ENCODE measurements at regions of chr15 and their contacts with region 1.

Region 1: GRCh38 chr15:98518823-98519561 is 129.3 kb upstream of the IGF1R start:
- H3K4me3 ChIP-seq: no peak overlapping the region
- H3K27ac ChIP-seq: no peak overlapping the region
- H3K4me1 ChIP-seq: no peaks in the 10 kb centered on the region; the same call in 1 of the 2 replicates
- CTCF ChIP-seq: peak; percentile 83

Region 2: GRCh38 chr15:98113327-98113726 is 405.7 kb before region 1 on chr15:
- CTCF ChIA-PET with region 1: no interaction called
- POLR2A ChIA-PET with region 1: no interaction called
- H3K4me3 ChIP-seq: no peak overlapping the region
- H3K27ac ChIP-seq: no peak overlapping the region
- H3K4me1 ChIP-seq: no peaks in the 10 kb centered on the region
- CTCF ChIP-seq: no peak

Region 3: DNA sequence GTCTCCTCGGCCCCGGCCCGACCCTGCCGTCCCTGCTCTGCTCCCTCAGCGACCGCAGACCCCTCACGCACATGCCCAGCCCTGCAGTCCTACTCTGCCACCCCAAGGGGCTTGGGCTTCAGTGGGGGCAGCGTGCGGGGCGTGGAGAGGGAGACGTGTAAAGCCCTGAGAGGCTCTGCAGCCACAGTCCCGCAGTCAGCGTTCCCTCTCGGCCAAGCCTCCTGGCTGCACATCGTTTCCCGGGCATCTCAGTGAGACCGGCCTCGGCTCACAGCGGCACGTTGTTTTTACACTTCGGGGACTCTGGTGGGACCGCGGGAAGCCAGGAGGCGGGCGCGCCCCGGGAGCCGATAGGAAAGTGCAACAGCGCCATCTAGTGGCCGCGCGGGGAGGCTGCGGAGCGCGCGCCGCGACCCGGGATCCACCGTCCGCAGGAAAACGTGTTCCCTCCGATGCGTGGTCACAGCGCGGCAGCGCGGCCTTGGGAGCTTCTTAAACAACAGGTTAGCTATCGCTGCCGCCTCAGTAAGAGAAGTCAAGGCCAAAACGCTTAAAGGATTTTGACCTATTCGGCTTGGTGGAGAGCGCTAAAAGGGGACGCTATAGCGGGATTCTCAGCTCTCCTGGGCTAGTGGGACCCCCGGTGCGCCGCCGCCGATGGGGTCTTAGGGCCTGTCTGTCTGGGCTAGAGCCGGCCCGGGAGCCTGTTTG is 97.4 kb before region 1 on chr15:
- CTCF ChIA-PET with region 1: no interaction called
- POLR2A ChIA-PET with region 1: no interaction called
- H3K4me3 ChIP-seq: peak overlapping the region; percentile 18
- H3K27ac ChIP-seq: no peak overlapping the region
- H3K4me1 ChIP-seq: 0 out of 2 replicates have a peak, but pooled peaks cover 2% of the 10 kb centered on the region
- CTCF ChIP-seq: peak; percentile 95

Region 4: DNA sequence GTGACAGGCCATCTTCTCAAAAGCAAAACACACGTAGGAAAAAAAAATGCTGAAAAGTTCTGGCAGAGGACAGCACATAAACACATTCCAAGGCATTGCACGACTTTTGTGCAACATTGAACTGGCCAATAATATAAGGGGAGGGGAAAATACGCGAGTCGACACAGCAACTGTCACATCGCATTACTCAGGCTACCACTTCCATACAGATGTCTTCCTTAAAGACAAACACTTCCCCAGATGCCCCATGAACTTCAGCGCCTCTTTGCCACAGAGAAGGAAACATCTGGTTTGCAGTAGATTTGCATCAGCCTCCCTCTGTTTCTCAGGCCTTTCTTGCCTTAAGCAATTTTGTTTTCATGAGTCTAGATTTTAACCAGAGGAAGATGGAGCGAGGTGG is 15.0 kb before region 1 on chr15:
- CTCF ChIA-PET with region 1: interaction called, 11 read pairs
- POLR2A ChIA-PET with region 1: no interaction called
- H3K4me3 ChIP-seq: no peak overlapping the region
- H3K27ac ChIP-seq: no peak overlapping the region
- H3K4me1 ChIP-seq: no peaks in the 10 kb centered on the region
- CTCF ChIP-seq: no peak

Region 5: DNA sequence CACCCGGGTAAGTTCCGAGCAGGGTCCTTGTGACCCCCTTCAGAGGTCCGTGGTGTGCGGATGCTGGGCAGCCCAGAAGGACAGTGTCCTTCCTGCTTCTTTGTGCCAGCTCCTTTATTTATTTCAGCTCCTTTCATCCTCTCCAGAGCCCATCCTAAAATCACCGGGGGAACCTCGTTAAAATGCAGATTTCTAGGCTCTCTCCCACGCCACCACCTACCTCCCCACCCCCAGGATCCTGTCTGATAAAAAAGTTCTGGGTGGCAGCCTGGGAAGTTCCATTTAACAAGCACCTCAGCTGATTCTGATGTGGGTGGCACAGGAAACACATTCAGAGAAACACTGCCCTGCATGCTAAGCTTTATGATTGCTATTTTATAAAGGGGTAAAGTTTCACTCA is 116.9 kb after region 1 on chr15:
- CTCF ChIA-PET with region 1: interaction called, 12 read pairs
- POLR2A ChIA-PET with region 1: no interaction called
- H3K4me3 ChIP-seq: no peak overlapping the region
- H3K27ac ChIP-seq: no peak overlapping the region
- H3K4me1 ChIP-seq: no peaks in the 10 kb centered on the region; the same call in 1 of the 2 replicates
- CTCF ChIP-seq: no peak

Region 6: DNA sequence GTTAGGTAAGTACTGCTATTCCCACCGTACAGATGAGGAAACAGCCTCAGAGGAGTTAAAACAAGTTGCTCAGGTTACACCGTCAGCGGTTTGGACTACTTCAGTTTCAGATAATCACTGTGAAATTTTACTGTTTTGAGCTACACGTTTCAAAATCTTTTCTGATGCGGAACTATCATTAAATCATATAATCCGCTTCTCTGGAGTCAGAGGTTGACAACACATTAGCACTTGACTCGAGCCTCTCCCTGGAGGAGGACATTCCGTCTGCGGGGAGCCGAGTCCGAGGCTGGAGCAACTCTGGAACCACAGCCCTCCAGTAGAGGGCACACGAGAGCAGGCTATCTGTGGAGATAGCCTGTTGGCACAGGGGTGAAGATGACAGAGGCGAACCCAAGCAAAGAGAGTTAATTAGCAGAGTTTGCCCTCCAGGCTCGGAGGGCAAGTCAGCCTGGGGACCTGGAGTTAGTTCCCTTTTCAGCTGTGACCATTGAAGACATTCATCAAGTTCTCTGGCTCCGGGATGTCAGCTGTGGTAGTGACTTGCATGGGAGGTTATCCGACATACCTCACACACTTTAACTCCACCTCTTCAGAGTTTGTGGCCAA is 260.6 kb after region 1 on chr15:
- CTCF ChIA-PET with region 1: interaction called, 15 read pairs
- POLR2A ChIA-PET with region 1: no interaction called
- H3K4me3 ChIP-seq: no peak overlapping the region
- H3K27ac ChIP-seq: no peak overlapping the region
- H3K4me1 ChIP-seq: peaks cover 24% of the 10 kb centered on the region
- CTCF ChIP-seq: peak; percentile 90

Region 7: GRCh38 chr15:98881526-98882520 is 362.8 kb after region 1 on chr15:
- CTCF ChIA-PET with region 1: interaction called, 12 read pairs
- POLR2A ChIA-PET with region 1: no interaction called
- H3K4me3 ChIP-seq: no peak overlapping the region
- H3K27ac ChIP-seq: no peak overlapping the region
- H3K4me1 ChIP-seq: peaks cover 9% of the 10 kb centered on the region
- CTCF ChIP-seq: 0 out of 2 replicates have a peak, but pooled peaks have one; percentile 27

Region 8: DNA sequence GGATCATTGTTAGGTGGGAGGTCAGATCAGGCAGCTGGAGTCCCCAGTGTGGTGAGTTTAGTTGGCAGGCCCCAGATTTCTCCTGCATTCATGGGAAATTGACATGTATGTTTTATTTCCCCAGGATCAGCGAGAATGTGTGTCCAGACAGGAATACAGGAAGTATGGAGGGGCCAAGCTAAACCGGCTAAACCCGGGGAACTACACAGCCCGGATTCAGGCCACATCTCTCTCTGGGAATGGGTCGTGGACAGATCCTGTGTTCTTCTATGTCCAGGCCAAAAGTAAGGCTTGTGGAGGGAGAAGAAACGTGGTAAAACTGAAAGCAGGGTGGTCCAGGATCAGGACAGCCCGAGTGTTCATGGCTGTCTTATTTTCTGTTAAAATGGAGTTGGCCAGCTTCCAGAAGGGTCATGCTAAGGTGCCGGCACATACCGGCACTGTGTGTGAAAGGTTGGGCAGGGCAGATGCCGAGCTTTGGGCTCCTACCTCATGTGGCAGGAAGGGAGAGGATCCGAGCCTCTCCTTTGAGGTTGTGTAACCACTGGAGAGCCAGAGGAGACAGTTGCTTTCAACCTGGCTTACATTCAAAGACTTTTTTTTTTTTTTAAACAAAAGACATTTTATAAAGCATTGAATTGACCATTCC is 405.5 kb after region 1 on chr15:
- CTCF ChIA-PET with region 1: no interaction called
- POLR2A ChIA-PET with region 1: no interaction called
- H3K4me3 ChIP-seq: no peak overlapping the region
- H3K27ac ChIP-seq: no peak overlapping the region
- H3K4me1 ChIP-seq: no peaks in the 10 kb centered on the region
- CTCF ChIP-seq: no peak

Measured in HEK293 (cell line).